ENCODE measurements at regions of chr12 and their contacts with region 1.

Region 1: DNA sequence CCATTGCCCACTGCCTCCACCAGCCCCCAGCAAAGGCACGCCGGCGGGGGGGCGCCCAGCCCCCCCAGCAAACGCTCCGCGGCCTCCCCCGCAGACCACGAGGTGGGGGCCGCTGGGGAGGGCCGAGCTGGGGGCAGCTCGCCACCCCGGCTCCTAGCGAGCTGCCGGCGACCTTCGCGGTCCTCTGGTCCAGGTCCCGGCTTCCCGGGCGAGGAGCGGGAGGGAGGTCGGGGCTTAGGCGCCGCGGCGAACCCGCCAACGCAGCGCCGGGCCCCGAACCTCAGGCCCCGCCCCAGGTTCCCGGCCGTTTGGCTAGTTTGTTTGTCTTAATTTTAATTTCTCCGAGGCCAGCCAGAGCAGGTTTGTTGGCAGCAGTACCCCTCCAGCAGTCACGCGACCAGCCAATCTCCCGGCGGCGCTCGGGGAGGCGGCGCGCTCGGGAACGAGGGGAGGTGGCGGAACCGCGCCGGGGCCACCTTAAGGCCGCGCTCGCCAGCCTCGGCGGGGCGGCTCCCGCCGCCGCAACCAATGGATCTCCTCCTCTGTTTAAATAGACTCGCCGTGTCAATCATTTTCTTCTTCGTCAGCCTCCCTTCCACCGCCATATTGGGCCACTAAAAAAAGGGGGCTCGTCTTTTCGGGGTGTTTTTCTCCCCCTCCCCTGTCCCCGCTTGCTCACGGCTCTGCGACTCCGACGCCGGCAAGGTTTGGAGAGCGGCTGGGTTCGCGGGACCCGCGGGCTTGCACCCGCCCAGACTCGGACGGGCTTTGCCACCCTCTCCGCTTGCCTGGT is at the start of gene CDKN1B:
- DNase-seq: peak; percentile 77
- H3K4me3 Mint-ChIP-seq: peak within 1 kb of the TSS; percentile 98
- H3K27ac Mint-ChIP-seq: peak within 1 kb of the TSS; percentile 99
- H3K4me1 Mint-ChIP-seq: peaks cover 71% of the 10 kb centered on the region
- H3K27me3 Mint-ChIP-seq: no peaks in the 10 kb centered on the region
- total RNA-seq, gene CDKN1B: 54.8 and 61.9 TPM in 2 replicates

Region 2: DNA sequence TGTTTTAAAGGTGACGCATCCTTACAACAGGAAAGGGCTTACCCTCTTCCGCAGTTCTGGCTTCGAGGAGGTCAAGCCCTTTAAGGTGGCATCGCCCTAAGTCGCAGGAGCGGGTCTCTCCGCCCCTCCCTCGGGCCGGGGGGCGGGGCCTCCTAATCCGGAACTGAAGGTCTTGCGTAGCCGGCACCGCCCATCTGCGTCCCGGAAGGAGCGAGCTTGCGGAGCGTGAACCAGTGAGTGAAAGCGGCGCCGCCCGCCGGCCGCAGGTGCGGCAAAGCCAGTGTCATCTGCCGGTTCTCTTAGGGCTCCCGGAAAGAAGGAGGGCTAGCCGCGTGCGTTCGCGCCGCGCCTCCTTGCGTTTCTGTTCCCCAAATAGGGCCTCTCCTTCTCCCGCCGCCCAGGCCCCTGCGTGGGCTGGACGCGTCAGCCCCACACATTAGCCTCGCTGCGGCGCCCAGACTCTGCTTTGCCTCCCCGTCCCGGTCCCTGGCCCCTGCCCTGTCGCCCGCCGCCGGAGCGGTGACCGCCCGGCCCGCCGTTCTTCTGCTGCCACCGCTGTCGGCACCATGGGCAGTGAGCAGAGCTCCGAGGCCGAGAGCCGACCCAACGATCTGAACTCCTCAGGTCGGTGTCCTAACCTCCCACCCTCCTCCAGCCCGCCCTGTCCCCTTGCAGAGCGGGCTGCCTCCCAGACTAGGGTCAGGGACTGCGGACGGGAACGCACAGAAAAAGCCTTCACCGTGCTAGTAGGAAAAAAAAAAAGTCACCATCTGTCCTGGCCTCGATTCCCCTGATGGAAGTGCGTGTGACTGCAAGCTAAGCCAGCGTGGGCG is 359.9 kb before region 1 on chr12 and contains the start of gene BORCS5:
- intact Hi-C with region 1: loop called (anchors 1 kb)
- DNase-seq: peak; percentile 98
- H3K4me3 Mint-ChIP-seq: peak within 1 kb of the TSS; percentile 97
- H3K27ac Mint-ChIP-seq: peak within 1 kb of the TSS; percentile 96
- H3K4me1 Mint-ChIP-seq: peaks cover 48% of the 10 kb centered on the region
- H3K27me3 Mint-ChIP-seq: no peaks in the 10 kb centered on the region
- total RNA-seq, gene BORCS5: 34.5 and 39.6 TPM in 2 replicates

Region 3: GRCh38 chr12:12505544-12506495 is 211.2 kb before region 1 on chr12:
- intact Hi-C with region 1: loop called (anchors 5 kb)
- DNase-seq: peak; percentile 17
- H3K4me3 Mint-ChIP-seq: peak overlapping the region; percentile 63
- H3K27ac Mint-ChIP-seq: peak overlapping the region; percentile 93
- H3K4me1 Mint-ChIP-seq: peaks cover 53% of the 10 kb centered on the region
- H3K27me3 Mint-ChIP-seq: no peaks in the 10 kb centered on the region

Region 4: GRCh38 chr12:12645485-12645884 is 71.5 kb before region 1 on chr12:
- intact Hi-C with region 1: loop called (anchors 5 kb)
- DNase-seq: peak; percentile 26
- H3K4me3 Mint-ChIP-seq: no peak overlapping the region
- H3K27ac Mint-ChIP-seq: peak overlapping the region; percentile 61
- H3K4me1 Mint-ChIP-seq: peaks cover 12% of the 10 kb centered on the region
- H3K27me3 Mint-ChIP-seq: no peaks in the 10 kb centered on the region

Region 5: GRCh38 chr12:12684375-12685106 is 32.4 kb before region 1 on chr12:
- intact Hi-C with region 1: no loop called
- DNase-seq: no peak
- H3K4me3 Mint-ChIP-seq: no peak overlapping the region
- H3K27ac Mint-ChIP-seq: no peak overlapping the region
- H3K4me1 Mint-ChIP-seq: peaks cover under 1% of the 10 kb centered on the region
- H3K27me3 Mint-ChIP-seq: no peaks in the 10 kb centered on the region

Region 6: DNA sequence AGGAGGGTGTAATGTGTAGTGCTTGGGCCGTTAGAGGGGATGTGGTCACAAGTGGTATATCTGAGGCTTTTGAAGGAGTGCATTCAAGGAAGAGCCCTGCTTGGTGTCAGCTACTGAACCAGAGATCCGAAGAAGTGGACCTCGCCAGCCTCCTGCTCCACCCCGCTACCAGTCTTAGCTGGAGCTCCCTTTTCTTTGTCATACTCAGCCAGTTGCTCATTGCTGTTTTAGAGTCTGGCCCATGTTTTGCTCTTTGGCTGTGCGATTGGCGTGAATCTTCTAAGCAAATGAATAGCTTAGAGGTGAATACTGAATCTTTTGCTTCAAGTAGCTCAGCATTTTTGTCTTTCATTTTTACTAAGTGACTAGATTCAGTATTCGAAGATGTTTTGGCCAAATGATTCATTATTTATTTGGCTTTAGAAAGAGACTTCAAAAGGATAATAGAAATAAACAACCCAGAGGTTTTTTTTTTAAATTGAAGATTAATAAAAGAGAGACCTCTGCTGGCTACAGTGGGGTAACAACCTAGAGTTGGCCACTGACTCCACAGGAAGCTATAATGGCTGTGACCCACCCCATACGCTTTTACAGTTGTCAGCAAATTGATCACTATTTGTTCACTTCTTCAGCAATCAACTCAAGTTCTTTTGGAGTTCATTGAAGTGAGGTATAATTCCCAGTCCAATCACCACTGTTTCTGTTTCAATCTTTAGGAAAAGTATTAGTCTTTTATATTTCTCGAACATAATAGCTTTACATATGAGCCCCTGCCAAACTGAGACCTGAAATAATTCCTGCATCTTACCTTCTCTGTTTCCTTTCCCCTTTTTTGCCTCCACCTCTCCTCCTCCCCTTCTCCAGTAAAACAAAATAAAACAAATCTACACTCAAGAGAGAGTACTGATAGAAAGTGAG is 20.0 kb after region 1 on chr12:
- intact Hi-C with region 1: loop called (anchors 1 kb)
- DNase-seq: peak; percentile 42
- H3K4me3 Mint-ChIP-seq: peak overlapping the region; percentile 74
- H3K27ac Mint-ChIP-seq: peak overlapping the region; percentile 89
- H3K4me1 Mint-ChIP-seq: peaks cover 59% of the 10 kb centered on the region
- H3K27me3 Mint-ChIP-seq: no peaks in the 10 kb centered on the region

Region 7: DNA sequence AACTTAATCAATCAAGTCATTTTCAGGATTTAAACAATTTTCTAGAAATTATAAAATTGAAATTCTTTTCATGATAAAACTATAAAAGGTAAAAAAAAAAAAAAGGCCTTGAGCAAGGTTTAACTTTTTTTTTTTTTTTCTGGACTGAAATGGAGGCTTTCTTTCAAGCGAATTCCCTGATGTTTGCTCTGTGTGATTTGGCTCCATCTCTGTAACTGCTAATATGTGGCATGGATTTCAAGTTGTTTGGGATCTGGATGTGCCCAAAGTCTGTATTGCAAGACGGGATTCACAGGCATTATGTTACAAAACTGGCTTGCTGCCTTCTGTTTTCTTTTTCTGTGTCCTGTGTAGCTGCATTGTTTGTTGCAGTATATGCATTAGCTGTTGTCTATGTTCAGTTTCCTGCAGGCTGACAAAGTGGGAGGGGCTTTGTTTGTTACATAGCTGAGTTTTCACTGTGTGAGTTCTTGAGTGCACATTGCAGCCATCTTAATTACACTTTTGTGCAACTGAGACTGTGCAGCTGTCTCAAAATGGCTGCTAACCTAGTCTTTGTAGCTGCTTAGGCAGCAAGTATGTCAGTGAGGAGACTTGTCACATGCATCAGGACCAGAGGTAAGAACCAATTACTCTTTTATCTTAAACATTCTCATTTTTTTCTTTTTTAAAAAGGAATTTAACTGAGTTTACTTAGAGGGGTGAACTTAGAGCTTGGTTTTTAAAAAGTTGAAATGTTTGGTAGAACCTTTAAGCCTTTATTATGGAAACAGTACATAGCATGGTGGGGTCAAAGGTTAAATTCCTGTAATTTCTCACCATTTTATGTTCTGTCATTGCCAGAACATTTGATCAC is 1668.0 kb after region 1 on chr12:
- intact Hi-C with region 1: loop called (anchors 5 kb)
- DNase-seq: peak; percentile 73
- H3K4me3 Mint-ChIP-seq: peak overlapping the region; percentile 86
- H3K27ac Mint-ChIP-seq: peak overlapping the region; percentile 97
- H3K4me1 Mint-ChIP-seq: peaks cover 58% of the 10 kb centered on the region
- H3K27me3 Mint-ChIP-seq: no peaks in the 10 kb centered on the region